Activated B cell treated with CpG ODN at 0.5 μM for 24 hours (primary cell): ENCODE measurements at regions of chr7 and their contacts with region 1.

Region 1: GRCh38 chr7:27196287-27196767 is 3.6 kb downstream of the HOXA13 start:
- DNase-seq: no peak
- ATAC-seq: no peak
- H3K4me3 Mint-ChIP-seq: no peak overlapping the region
- H3K27ac Mint-ChIP-seq: no peak overlapping the region
- H3K4me1 Mint-ChIP-seq: peaks cover 30% of the 10 kb centered on the region
- H3K27me3 Mint-ChIP-seq: peaks cover 65% of the 10 kb centered on the region
- CTCF ChIP-seq: no peak

Region 2: DNA sequence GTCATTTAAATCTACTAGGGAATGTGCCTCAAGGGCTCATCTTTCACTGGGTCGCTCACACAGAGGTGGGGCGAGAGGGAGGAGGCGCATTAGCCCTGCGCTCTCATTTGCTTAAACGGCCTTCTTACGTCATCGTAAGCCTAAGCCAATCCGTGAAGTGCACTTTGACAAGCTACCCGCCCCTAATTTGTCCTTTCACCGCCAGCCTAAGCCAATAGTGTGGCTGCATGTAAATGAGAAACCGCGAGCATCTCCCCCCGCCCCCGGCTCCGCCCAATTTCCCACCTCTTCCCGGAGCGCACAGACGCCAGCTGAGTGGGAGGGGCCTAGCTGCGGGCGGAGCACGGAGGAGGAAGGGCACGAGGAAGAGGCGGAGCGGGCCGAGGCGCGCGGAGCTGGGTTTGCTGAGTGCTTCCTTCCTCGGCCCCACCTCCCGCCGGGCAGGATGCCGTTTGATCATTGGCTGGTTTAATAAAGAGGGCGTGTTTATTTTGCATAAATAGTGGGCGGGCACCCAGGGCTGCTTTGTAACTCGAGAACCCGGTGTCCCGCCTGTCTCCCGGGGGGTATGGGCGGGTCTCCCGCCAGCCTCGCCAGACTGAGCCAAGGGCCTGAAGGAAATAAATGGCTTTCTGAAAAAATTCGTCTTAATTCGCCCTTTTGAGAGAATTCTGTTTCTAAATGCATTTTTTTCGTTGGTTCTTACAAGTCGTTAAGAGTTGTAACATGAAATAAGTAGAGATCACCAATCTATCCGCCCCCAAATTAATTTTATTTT is 1333.9 kb before region 1 on chr7:
- CTCF ChIA-PET with region 1: interaction called, 4 read pairs
- POLR2A ChIA-PET with region 1: no interaction called
- intact Hi-C with region 1: loop called (anchors 2 kb)
- DNase-seq: peak; percentile 49
- ATAC-seq: peak; percentile 89
- H3K4me3 Mint-ChIP-seq: peak overlapping the region; percentile 35
- H3K27ac Mint-ChIP-seq: peak overlapping the region; percentile 59
- H3K4me1 Mint-ChIP-seq: peaks cover 14% of the 10 kb centered on the region
- H3K27me3 Mint-ChIP-seq: peaks cover 63% of the 10 kb centered on the region
- CTCF ChIP-seq: no peak

Region 3: DNA sequence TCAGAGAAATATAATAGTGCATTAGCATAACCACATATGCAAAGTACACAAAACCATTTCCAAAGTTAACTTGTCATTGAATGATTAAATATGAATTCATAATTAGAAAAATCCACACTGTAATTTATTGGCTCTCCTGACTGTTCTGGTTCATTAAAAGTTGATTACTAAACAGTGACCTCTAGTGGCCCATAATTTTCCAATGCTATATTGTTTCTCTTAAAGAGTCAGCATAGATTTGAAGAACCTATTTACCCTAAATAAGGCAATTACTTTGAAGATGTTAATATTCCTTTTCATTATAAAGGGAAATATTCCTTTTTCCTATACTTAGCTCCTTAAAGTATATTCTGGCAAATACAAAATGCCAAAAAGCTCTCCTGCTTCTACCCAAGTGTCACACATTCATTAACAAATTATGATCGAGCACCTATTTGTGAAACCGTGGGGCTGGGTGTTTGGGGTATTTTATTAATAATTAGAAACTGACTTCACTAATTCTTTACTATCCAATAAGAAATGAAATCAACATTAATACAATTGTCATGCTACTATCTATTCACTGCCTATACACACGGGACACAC is 380.1 kb after region 1 on chr7:
- CTCF ChIA-PET with region 1: interaction called, 8 read pairs
- POLR2A ChIA-PET with region 1: no interaction called
- intact Hi-C with region 1: loop called (anchors 1 kb)
- DNase-seq: no peak
- ATAC-seq: no peak
- H3K4me3 Mint-ChIP-seq: no peak overlapping the region
- H3K27ac Mint-ChIP-seq: no peak overlapping the region
- H3K4me1 Mint-ChIP-seq: no peaks in the 10 kb centered on the region
- H3K27me3 Mint-ChIP-seq: no peaks in the 10 kb centered on the region
- CTCF ChIP-seq: peak; percentile 26

Region 4: DNA sequence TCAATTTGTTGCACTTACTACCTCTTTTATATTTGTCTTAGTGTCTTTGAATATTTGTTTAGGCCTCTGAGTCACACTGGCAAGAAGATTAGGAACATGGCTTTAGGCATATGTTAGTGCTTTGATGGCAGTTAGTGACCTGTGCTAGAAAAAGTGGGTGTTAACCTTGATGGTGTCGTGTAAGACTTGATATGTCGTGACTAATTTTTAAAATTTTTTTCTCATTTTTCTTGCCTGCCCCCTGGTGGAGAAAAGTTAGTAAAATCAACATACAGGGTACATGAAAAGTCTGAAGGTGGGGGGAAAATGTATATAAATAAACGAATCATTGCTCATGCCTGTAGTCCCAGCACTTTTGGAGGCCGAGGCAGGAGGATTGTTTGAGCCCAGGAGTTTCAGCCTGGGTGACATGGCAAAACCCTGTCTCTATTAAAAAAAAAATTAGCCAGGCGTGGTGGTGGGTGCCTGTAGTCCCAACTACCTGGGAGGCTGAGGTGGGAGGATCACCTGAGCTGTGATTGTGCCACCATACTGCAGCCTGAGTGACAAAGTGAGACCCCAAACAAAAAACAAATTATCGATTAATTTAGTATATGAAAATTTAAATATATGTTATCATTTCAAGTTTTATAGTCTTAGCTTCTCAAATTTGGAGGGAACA is 588.2 kb after region 1 on chr7:
- CTCF ChIA-PET with region 1: interaction called, 10 read pairs
- POLR2A ChIA-PET with region 1: no interaction called
- intact Hi-C with region 1: loop called (anchors 1 kb)
- DNase-seq: no peak
- ATAC-seq: peak; percentile 40
- H3K4me3 Mint-ChIP-seq: no peak overlapping the region
- H3K27ac Mint-ChIP-seq: no peak overlapping the region
- H3K4me1 Mint-ChIP-seq: peaks cover 3% of the 10 kb centered on the region
- H3K27me3 Mint-ChIP-seq: no peaks in the 10 kb centered on the region
- CTCF ChIP-seq: no peak

Region 5: DNA sequence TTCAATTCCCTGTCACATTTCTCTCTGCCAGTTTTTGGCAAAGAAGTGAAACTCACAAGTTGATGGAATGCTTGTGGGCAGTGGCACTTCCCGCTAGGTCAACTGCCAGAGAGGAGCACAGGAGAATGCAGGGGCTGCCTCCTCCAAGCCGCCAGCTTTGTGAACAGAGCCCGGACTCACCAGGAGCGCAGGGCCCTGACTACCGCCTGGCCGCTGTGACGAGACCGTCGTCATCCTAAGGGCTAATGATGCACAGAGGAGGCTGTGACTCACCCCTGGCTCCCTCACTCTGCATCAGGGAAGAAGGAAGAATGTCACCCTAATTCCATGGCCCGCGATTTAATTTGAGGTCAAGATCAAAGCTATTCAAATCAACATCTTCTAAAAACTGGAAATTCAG is 667.6 kb after region 1 on chr7:
- CTCF ChIA-PET with region 1: no interaction called
- POLR2A ChIA-PET with region 1: no interaction called
- intact Hi-C with region 1: no loop called
- DNase-seq: no peak
- ATAC-seq: no peak
- H3K4me3 Mint-ChIP-seq: no peak overlapping the region
- H3K27ac Mint-ChIP-seq: no peak overlapping the region
- H3K4me1 Mint-ChIP-seq: no peaks in the 10 kb centered on the region
- H3K27me3 Mint-ChIP-seq: no peaks in the 10 kb centered on the region
- CTCF ChIP-seq: no peak

Region 6: DNA sequence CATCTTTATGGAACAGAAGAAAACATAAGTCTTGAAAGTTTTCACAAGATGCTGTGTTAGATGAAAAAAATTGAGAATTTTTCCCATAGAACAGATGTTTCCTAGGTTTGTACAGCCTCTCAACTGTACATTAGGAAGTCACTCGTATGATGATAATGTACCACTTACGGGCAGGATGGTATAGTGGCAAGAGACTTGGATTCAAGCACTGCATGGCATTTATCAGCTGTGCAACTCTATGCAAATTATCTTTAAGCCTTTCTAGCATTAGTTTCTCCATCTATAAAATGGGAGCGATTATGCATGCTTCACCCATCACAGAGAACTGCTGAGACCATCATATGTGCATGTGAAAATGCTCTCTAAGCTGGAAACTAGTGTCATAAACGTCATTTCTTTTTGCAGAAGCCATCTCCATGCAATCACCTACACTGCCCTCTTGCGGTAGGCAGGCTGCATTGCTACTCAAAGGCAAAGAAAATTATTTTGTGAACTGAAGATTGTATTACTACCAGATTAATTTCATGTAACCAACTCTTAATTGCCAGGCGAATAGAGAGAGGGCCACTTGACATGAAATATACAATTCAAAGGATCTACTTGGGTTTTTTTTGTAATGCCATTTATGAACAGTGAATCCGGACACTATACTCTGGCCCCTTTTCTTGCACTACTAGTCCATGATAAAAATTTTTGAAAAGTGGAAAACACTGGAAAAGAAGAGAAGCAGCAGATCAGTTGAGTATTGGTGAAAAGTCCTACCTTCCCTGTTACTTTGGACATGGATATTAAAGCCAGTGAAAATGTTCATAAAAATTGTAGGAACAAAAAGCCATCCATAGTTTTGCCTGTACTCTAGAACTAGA is 881.9 kb after region 1 on chr7:
- CTCF ChIA-PET with region 1: interaction called, 11 read pairs
- POLR2A ChIA-PET with region 1: no interaction called
- intact Hi-C with region 1: loop called (anchors 1 kb)
- DNase-seq: no peak
- ATAC-seq: peak; percentile 71
- H3K4me3 Mint-ChIP-seq: no peak overlapping the region
- H3K27ac Mint-ChIP-seq: no peak overlapping the region
- H3K4me1 Mint-ChIP-seq: peaks cover 43% of the 10 kb centered on the region
- H3K27me3 Mint-ChIP-seq: no peaks in the 10 kb centered on the region
- CTCF ChIP-seq: peak; percentile 62

Region 7: DNA sequence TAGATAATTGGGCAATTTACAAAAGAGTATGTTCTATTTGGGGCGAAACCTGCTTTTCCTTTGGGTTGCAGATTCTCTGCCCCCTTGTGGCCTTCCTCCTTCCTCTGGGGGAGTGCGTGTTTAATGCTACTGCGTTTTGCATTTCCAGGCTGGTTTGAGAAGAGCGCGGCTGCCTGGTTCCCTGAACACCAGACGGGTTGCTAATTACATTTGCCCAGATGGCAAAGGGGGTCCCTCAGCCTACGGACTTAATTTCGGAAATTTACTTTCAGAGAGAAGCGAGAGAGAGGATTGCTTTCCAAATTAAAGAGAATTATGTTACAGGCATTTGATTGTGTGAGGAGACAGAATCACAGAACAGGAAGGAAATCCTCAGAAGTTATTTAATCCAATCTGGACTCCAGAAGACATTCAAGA is 1076.1 kb after region 1 on chr7:
- CTCF ChIA-PET with region 1: no interaction called
- POLR2A ChIA-PET with region 1: no interaction called
- intact Hi-C with region 1: loop called (anchors 10 kb)
- DNase-seq: peak; percentile 30
- ATAC-seq: peak; percentile 64
- H3K4me3 Mint-ChIP-seq: peak overlapping the region; percentile 79
- H3K27ac Mint-ChIP-seq: no peak overlapping the region
- H3K4me1 Mint-ChIP-seq: peaks cover 27% of the 10 kb centered on the region
- H3K27me3 Mint-ChIP-seq: no peaks in the 10 kb centered on the region
- CTCF ChIP-seq: no peak

Region 8: GRCh38 chr7:28921822-28922221 is 1725.5 kb after region 1 on chr7:
- CTCF ChIA-PET with region 1: no interaction called
- POLR2A ChIA-PET with region 1: no interaction called
- intact Hi-C with region 1: loop called (anchors 5 kb)
- DNase-seq: no peak
- ATAC-seq: peak; percentile 87
- H3K4me3 Mint-ChIP-seq: no peak overlapping the region
- H3K27ac Mint-ChIP-seq: no peak overlapping the region
- H3K4me1 Mint-ChIP-seq: peaks cover 12% of the 10 kb centered on the region
- H3K27me3 Mint-ChIP-seq: peaks cover 3% of the 10 kb centered on the region
- CTCF ChIP-seq: peak; percentile 83